ENCODE measurements at regions of chr2 and their contacts with region 1.

Region 1: GRCh38 chr2:203814661-203815540 is 52.7 kb upstream of the CTLA4 start:
- DNase-seq: peak; percentile 62
- H3K4me3 Mint-ChIP-seq: no peak overlapping the region
- H3K27ac Mint-ChIP-seq: no peak overlapping the region
- H3K4me1 Mint-ChIP-seq: peaks cover 57% of the 10 kb centered on the region
- H3K27me3 Mint-ChIP-seq: no peaks in the 10 kb centered on the region

Region 2: DNA sequence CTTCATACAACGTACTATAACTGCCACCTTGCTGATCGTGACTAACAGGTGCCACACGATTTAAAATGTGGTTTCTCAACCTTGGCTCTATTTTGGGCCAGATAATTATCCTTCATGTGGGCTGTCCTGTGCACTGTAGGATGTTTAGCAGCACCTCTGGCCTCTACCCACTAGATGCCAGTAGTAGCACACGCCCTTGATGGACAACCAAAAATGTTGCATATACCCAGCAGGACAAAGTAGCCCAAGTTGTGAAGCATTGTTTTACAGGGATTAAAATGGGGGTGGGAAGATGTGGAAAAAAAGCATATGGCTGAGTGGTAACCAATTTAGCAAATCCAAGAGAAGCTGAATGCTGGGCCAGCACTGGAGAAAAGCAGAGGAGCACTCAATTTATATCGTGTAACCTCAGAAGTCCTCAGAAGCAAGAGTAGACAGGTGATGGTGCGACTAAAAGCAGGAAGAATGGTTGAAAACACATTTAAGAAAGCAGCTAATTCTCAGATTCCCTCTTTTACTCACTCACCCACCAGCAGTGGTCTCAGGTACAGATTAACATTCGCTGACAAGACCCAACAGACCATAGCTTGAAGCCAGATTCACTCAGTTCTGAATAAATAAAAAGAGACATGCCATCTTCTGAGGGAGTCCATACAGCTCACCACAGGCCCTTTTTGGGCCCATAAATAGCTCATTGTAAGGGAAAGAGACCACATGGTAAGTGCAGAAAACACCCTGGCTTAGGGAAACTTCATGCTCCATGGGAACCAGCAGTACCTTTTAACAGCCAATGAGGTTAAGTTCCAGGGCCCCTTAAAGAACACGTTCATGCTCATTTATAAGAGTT is 330.4 kb before region 1 on chr2:
- CTCF ChIA-PET with region 1: interaction called, 14 read pairs
- POLR2A ChIA-PET with region 1: no interaction called
- DNase-seq: peak; percentile 61
- H3K4me3 Mint-ChIP-seq: no peak overlapping the region
- H3K27ac Mint-ChIP-seq: no peak overlapping the region
- H3K4me1 Mint-ChIP-seq: peaks cover 7% of the 10 kb centered on the region
- H3K27me3 Mint-ChIP-seq: no peaks in the 10 kb centered on the region

Region 3: GRCh38 chr2:203804070-203804469 is 10.8 kb before region 1 on chr2:
- CTCF ChIA-PET with region 1: interaction called, 14 read pairs
- POLR2A ChIA-PET with region 1: interaction called, 4 read pairs
- DNase-seq: peak; percentile 60
- H3K4me3 Mint-ChIP-seq: peak overlapping the region; percentile 26
- H3K27ac Mint-ChIP-seq: peak overlapping the region; percentile 67
- H3K4me1 Mint-ChIP-seq: peaks cover 70% of the 10 kb centered on the region
- H3K27me3 Mint-ChIP-seq: no peaks in the 10 kb centered on the region

Region 4: DNA sequence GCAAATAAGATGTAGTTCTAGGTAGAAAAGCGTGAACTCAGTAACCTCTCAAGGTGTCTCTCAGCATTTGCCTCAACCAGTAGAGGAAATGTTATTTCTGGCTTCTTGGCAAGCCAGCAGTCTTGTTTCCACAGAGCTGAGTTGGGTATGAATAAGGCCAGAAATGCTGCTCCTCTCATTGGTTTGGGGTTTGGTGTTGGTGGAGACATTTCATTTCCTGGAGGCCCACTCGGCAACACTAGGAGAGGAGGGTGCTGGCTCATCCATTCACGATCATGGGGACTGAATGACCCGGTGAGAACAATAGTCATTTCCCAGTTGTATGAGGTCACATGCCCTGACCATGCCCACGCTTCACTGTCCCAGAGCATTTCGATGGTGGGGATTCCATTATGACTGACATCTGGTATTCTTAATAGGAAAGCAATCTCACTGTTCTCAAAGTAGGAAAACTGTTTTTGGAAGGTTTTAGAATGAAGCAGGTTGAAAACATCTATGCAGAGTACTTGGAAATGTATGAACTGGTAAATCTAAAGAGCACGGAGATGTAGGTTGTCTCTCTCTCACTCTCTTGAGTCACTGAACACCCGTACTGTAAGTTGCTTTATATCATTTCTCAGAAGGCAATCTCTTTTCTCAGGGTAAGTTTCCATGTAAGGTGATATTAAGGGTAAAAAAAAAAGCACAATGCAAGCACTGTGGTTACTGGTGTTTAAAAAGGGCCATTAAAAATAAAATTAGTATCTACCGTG is 15.6 kb after region 1 on chr2:
- CTCF ChIA-PET with region 1: interaction called, 13 read pairs
- POLR2A ChIA-PET with region 1: no interaction called
- DNase-seq: peak; percentile 27
- H3K4me3 Mint-ChIP-seq: peak overlapping the region; percentile 20
- H3K27ac Mint-ChIP-seq: peak overlapping the region; percentile 83
- H3K4me1 Mint-ChIP-seq: peaks cover 14% of the 10 kb centered on the region
- H3K27me3 Mint-ChIP-seq: no peaks in the 10 kb centered on the region

Region 5: GRCh38 chr2:203835867-203836800 is 21.2 kb after region 1 on chr2:
- CTCF ChIA-PET with region 1: interaction called, 13 read pairs
- POLR2A ChIA-PET with region 1: no interaction called
- DNase-seq: no peak
- H3K4me3 Mint-ChIP-seq: no peak overlapping the region
- H3K27ac Mint-ChIP-seq: no peak overlapping the region
- H3K4me1 Mint-ChIP-seq: peaks cover 11% of the 10 kb centered on the region
- H3K27me3 Mint-ChIP-seq: no peaks in the 10 kb centered on the region

Region 6: DNA sequence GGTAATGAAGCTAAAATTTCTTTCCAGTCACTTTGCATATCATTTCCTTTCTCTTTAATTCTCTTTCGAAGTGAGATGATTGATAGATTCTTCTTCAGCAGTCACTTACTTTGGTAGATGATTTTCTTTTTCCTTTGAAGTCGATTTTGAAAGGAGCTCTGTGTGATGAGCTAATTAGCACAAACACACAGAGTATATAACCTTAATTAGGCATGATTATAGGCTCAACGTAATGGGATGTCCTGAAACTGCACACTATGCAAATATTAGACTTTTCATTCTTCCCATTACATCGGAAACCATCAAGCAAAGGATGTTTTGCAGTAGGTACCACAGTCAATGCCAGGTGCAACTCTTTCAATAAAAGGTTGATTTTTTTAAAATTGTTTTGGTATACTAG is 46.3 kb after region 1 on chr2:
- CTCF ChIA-PET with region 1: interaction called, 13 read pairs
- POLR2A ChIA-PET with region 1: no interaction called
- DNase-seq: no peak
- H3K4me3 Mint-ChIP-seq: no peak overlapping the region
- H3K27ac Mint-ChIP-seq: peak overlapping the region; percentile 20
- H3K4me1 Mint-ChIP-seq: peaks cover 57% of the 10 kb centered on the region
- H3K27me3 Mint-ChIP-seq: no peaks in the 10 kb centered on the region

Region 7: DNA sequence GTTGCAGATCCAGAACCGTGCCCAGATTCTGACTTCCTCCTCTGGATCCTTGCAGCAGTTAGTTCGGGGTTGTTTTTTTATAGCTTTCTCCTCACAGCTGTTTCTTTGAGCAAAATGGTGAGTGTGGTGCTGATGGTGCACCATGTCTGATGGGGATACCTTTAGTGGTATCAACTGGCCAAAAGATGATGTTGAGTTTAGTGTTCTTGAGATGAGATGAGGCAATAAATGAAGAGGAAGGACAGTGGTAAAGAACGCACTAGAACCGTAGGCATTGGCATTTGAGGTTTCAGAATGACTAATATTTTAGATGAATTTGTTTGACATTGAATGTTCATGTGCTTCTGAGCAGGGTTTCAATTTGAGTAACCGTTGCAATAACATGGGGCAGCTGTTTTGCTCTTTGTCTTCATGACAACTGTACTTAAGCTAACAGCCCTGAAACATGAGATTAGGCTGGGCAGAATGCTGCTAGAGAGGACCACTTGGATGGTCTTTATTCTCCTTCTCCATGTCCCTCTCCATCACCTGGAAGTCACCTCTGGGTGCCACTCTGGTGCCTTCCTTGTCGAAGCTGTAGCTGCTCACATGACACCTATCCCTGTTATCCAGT is 56.6 kb after region 1 on chr2:
- CTCF ChIA-PET with region 1: interaction called, 33 read pairs
- POLR2A ChIA-PET with region 1: interaction called, 3 read pairs
- DNase-seq: peak; percentile 67
- H3K4me3 Mint-ChIP-seq: peak overlapping the region; percentile 78
- H3K27ac Mint-ChIP-seq: peak overlapping the region; percentile 97
- H3K4me1 Mint-ChIP-seq: peaks cover 90% of the 10 kb centered on the region
- H3K27me3 Mint-ChIP-seq: no peaks in the 10 kb centered on the region

Measured in activated CD4-positive, alpha-beta T cell treated with anti-CD3 and anti-CD28 coated beads, Interleukin-2, amount 10 ng/mL, durations not matched to agents 7 days and 5 days (primary cell).